ENCODE measurements at regions of chr3 and their contacts with region 1.

Region 1: DNA sequence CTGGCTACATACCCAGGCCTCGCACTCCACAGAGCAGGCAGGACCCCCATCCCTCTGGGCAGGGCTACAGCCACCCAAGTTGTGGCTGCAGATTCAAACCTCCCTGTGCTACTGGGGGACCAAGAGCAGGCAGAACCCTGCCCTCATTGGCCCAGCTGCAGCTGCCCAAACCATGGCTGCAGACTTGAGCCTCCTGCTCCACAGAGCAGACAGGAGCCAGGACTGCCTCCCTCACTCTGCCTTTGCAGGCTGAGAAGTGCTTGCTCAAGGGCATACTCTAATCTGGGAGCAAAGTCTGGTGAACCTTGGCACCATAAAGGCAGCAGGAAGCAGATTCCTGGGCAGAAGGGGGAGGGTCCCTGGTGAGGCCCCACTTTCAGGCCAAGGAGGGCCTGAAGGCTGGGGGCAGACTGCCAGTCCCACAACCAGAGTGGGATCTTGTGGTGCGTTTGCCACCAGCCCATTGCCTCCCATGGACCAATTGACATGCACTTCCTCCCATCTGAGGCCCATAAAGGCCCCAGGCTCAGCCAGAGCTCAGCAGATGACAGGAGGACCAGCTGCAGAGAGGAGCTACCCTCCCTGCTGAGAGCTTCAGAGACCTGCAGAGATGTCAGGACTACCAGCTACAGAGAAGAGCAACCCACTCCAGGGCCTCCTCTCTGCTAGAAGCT is 64.2 kb upstream of the EPHA6 start:
- DNase-seq: no peak
- H3K4me3 ChIP-seq: no peak overlapping the region
- H3K27ac ChIP-seq: no peak overlapping the region
- H3K4me1 ChIP-seq: no peaks in the 10 kb centered on the region
- H3K27me3 ChIP-seq: no peaks in the 10 kb centered on the region
- CTCF ChIP-seq: no peak
- POLR2A ChIP-seq: no peak

Region 2: DNA sequence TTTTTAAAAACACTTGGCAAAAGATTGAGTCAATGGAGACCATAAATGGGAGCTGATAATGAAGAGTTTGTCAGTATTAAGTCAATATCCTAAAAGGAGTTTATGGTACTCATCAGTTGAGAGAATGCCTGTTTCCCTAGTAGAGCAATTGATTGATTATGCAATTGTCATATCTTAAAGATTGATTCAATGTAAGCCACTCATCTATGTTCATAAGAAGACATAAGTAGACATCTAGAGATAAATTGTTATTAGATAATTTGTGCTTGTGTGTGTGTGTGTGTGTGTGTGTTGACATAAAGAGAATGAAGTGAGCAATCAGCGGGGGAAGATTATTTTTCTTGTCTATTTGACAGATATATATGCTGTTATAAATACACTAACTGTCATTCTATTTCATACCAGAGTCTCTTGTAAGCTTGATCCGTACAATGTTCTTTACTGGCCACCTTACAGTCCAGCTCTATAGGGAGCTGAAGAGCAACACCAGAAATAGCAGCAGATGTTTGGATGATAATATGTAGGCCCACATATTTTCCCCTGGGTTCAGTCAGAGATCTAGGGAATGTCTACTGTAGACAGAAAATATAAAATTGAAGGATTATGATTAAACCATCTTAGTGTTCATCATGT is 784.4 kb before region 1 on chr3:
- intact Hi-C with region 1: loop called (anchors 5 kb)
- DNase-seq: no peak
- H3K4me3 ChIP-seq: no peak overlapping the region
- H3K27ac ChIP-seq: no peak overlapping the region
- H3K4me1 ChIP-seq: no peaks in the 10 kb centered on the region
- H3K27me3 ChIP-seq: no peaks in the 10 kb centered on the region
- CTCF ChIP-seq: no peak
- POLR2A ChIP-seq: no peak

Region 3: GRCh38 chr3:96631050-96631449 is 119.2 kb before region 1 on chr3:
- intact Hi-C with region 1: no loop called
- DNase-seq: no peak
- H3K4me3 ChIP-seq: no peak overlapping the region
- H3K27ac ChIP-seq: no peak overlapping the region
- H3K4me1 ChIP-seq: no peaks in the 10 kb centered on the region
- H3K27me3 ChIP-seq: no peaks in the 10 kb centered on the region
- CTCF ChIP-seq: no peak
- POLR2A ChIP-seq: no peak

Measured in vagina (tissue), 2 donors.